ENCODE measurements at regions of chr13 and their contacts with region 1.

Region 1: GRCh38 chr13:34156841-34157365 is 339.0 kb downstream of the RFC3 start:
- DNase-seq: peak; percentile 84
- H3K4me3 Mint-ChIP-seq: peak overlapping the region; percentile 51
- H3K27ac Mint-ChIP-seq: peak overlapping the region; percentile 98
- H3K4me1 Mint-ChIP-seq: peaks cover 76% of the 10 kb centered on the region
- H3K27me3 Mint-ChIP-seq: no peaks in the 10 kb centered on the region
- CTCF ChIP-seq: no peak

Region 2: GRCh38 chr13:33931397-33932311 is 225.2 kb before region 1 on chr13:
- CTCF ChIA-PET with region 1: no interaction called
- intact Hi-C with region 1: loop called (anchors 10 kb)
- DNase-seq: peak; percentile 44
- H3K4me3 Mint-ChIP-seq: no peak overlapping the region
- H3K27ac Mint-ChIP-seq: no peak overlapping the region
- H3K4me1 Mint-ChIP-seq: peaks cover 8% of the 10 kb centered on the region
- H3K27me3 Mint-ChIP-seq: no peaks in the 10 kb centered on the region
- CTCF ChIP-seq: peak; percentile 33

Region 3: GRCh38 chr13:34044660-34045080 is 112.2 kb before region 1 on chr13:
- CTCF ChIA-PET with region 1: no interaction called
- intact Hi-C with region 1: no loop called
- DNase-seq: peak; percentile 14
- H3K4me3 Mint-ChIP-seq: no peak overlapping the region
- H3K27ac Mint-ChIP-seq: peak overlapping the region; percentile 79
- H3K4me1 Mint-ChIP-seq: peaks cover 24% of the 10 kb centered on the region
- H3K27me3 Mint-ChIP-seq: no peaks in the 10 kb centered on the region
- CTCF ChIP-seq: no peak

Region 4: DNA sequence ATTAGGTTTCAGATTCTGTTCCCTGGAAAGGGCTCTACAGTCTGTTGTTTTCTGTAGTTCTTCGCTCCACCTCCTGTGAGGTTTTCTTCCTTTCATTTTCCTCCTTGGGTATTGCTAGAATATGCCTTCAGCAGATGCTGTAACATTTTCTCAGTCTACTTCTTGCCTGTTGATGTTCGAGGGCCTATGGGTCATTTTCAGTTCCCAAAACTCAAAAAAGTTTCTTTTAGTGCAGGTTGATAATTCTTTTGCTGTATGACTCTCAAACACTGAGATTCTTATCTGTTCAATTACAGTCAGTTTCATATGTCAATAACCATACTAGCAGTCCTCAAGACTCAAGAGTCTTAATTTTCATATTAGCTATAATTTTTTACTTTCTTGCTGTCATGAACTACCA is 70.6 kb before region 1 on chr13:
- CTCF ChIA-PET with region 1: no interaction called
- intact Hi-C with region 1: no loop called
- DNase-seq: no peak
- H3K4me3 Mint-ChIP-seq: no peak overlapping the region
- H3K27ac Mint-ChIP-seq: no peak overlapping the region
- H3K4me1 Mint-ChIP-seq: no peaks in the 10 kb centered on the region
- H3K27me3 Mint-ChIP-seq: no peaks in the 10 kb centered on the region
- CTCF ChIP-seq: no peak

Region 5: GRCh38 chr13:34167347-34167746 is 10.4 kb after region 1 on chr13:
- CTCF ChIA-PET with region 1: interaction called, 12 read pairs
- intact Hi-C with region 1: loop called (anchors 1 kb)
- DNase-seq: no peak
- H3K4me3 Mint-ChIP-seq: no peak overlapping the region
- H3K27ac Mint-ChIP-seq: peak overlapping the region; percentile 45
- H3K4me1 Mint-ChIP-seq: peaks cover 51% of the 10 kb centered on the region
- H3K27me3 Mint-ChIP-seq: no peaks in the 10 kb centered on the region
- CTCF ChIP-seq: no peak

Region 6: GRCh38 chr13:34294483-34295129 is 137.7 kb after region 1 on chr13:
- CTCF ChIA-PET with region 1: no interaction called
- intact Hi-C with region 1: no loop called
- DNase-seq: no peak
- H3K4me3 Mint-ChIP-seq: no peak overlapping the region
- H3K27ac Mint-ChIP-seq: no peak overlapping the region
- H3K4me1 Mint-ChIP-seq: peaks cover 19% of the 10 kb centered on the region
- H3K27me3 Mint-ChIP-seq: no peaks in the 10 kb centered on the region
- CTCF ChIP-seq: no peak

Region 7: GRCh38 chr13:34349091-34349722 is 192.3 kb after region 1 on chr13:
- CTCF ChIA-PET with region 1: no interaction called
- intact Hi-C with region 1: loop called (anchors 5 kb)
- DNase-seq: peak; percentile 22
- H3K4me3 Mint-ChIP-seq: no peak overlapping the region
- H3K27ac Mint-ChIP-seq: no peak overlapping the region
- H3K4me1 Mint-ChIP-seq: peaks cover 41% of the 10 kb centered on the region
- H3K27me3 Mint-ChIP-seq: no peaks in the 10 kb centered on the region
- CTCF ChIP-seq: no peak

Region 8: DNA sequence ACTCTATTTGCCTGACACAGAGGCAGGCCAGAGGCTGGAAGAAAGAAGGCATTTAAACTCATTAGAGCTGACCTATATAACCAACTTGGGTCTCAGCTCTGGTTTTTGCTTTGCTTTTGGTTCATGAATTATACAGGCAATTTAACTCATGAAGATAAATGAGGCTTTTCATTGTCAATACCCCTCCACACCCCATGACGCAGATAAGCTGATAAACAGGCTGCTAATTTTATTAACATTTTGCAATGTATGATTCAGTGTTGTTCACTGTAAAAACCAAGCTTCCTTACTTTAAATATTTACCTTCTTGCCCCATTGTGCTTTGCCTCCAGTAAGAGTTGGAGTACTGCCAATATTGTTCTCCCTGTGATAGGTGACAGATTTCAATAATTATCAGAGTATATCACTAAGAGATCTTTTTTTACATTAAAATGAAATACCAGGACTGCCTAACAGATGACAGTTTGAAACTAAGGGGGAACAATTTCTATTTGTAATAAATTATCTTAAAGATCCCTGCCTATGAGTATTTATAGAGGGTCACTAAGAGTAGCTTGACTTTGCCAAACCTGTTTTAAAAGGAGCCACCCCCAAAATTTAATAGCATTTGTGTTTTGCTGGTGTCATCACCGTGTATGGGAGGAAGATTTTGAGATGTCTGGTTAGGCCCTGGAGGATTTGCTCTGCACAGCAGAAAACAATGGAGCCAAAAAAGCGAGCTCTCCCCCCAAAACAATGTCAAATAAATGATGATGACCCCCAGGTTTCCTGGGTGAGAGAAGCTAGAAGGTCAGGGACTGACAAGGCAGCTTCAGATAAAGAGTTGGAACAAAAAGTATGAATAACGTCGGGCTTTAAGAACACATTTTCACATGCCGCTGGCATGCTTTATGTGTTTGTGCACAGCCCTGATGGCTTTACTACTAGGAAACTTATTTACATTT is 312.6 kb after region 1 on chr13:
- CTCF ChIA-PET with region 1: no interaction called
- intact Hi-C with region 1: loop called (anchors 5 kb)
- DNase-seq: peak; percentile 30
- H3K4me3 Mint-ChIP-seq: no peak overlapping the region
- H3K27ac Mint-ChIP-seq: peak overlapping the region; percentile 83
- H3K4me1 Mint-ChIP-seq: peaks cover 45% of the 10 kb centered on the region
- H3K27me3 Mint-ChIP-seq: no peaks in the 10 kb centered on the region
- CTCF ChIP-seq: no peak

Region 9: GRCh38 chr13:34748073-34748472 is 591.2 kb after region 1 on chr13:
- CTCF ChIA-PET with region 1: no interaction called
- intact Hi-C with region 1: loop called (anchors 2 kb)
- DNase-seq: peak; percentile 52
- H3K4me3 Mint-ChIP-seq: no peak overlapping the region
- H3K27ac Mint-ChIP-seq: peak overlapping the region; percentile 94
- H3K4me1 Mint-ChIP-seq: no peaks in the 10 kb centered on the region
- H3K27me3 Mint-ChIP-seq: no peaks in the 10 kb centered on the region
- CTCF ChIP-seq: no peak

Region 10: DNA sequence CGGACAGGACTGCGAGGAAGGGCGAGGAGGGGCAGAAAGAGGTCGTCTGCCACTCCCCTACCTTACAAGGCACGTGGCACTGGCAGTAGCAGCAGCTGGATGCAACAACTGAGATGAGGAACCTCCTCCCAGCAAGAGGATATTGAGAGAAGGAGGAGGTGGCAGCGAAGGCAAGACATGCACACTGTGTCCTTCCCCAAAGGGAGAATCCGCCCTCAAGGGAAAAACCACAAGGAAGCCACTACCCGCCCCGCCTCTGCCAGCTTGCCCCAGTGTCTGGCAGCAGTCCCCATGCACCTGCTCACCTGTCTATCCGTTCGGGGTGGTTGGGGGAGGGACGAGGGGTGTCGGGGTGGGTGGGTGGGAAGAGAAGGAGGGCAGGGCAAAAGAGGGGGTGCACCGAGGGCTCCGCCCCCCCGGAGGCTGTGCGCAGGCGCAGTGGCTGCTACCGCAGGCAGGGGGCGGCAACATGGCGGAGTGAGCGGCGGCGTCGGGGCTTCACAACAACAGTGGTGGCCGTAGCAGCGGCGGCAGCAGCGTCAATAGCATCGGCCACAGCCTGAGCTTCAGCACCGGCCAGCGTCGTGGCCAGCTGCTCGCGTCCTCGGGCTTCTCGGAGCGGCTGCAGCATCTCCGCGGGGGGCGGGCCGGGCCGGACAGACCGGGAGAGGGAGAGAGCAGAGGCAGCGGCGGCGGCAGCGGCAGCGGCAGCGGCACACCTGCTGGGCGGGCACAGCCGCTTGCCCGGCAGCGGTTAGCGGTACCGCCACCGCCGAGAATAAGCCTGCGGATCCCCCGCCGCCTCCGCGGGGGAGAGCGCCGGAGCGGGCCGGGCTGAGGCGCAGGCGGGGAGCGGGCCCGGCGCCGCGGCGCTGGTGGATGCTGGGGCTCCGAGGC is 785.2 kb after region 1 on chr13 and contains the start of gene NBEA:
- CTCF ChIA-PET with region 1: no interaction called
- intact Hi-C with region 1: loop called (anchors 5 kb)
- DNase-seq: peak; percentile 91
- H3K4me3 Mint-ChIP-seq: peak within 1 kb of the TSS; percentile 68
- H3K27ac Mint-ChIP-seq: peak within 1 kb of the TSS; percentile 84
- H3K4me1 Mint-ChIP-seq: no peaks in the 10 kb centered on the region
- H3K27me3 Mint-ChIP-seq: no peaks in the 10 kb centered on the region
- CTCF ChIP-seq: no peak
- total RNA-seq, gene NBEA: 18.0 and 21.4 TPM in 2 replicates

Measured in Calu3 (cell line).